A549 (cell line): ENCODE measurements at regions of chr7 and their contacts with region 1.

Region 1: DNA sequence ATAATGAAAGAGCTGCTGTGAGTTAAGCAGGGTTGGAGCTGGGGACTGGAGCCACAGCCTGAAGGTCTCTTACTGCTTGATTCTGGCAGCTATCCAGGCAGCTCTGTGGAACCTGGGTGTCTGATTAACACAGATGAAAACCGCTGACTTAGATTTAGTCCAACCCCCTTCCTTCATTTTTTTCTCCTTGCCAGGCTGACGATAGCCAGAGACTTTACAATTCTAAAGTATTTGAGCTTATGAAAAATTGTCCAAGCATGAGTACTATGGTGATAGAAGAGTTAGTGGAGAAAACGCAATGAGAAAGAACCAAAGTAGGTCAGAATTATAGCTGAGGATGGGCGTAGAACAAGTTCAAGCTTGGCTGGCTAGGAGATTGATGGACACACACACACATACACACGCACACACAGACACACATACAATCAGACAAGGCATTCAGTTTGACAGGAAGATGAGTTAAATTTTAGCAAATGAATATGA is 13.5 kb upstream of the GPR85 start:
- DNase-seq: no peak
- ATAC-seq: no peak
- H3K4me3 ChIP-seq: no peak overlapping the region
- H3K27ac ChIP-seq: no peak overlapping the region
- H3K4me1 ChIP-seq: no peaks in the 10 kb centered on the region
- CTCF ChIP-seq: no peak
- EP300 ChIP-seq: no peak
- POLR2A ChIP-seq: no peak
- RAD21 ChIP-seq: no peak

Region 2: GRCh38 chr7:113040849-113041248 is 59.3 kb before region 1 on chr7:
- CTCF ChIA-PET with region 1: no interaction called
- POLR2A ChIA-PET with region 1: no interaction called
- DNase-seq: no peak
- ATAC-seq: no peak
- H3K4me3 ChIP-seq: no peak overlapping the region
- H3K27ac ChIP-seq: no peak overlapping the region
- H3K4me1 ChIP-seq: no peaks in the 10 kb centered on the region
- CTCF ChIP-seq: no peak
- EP300 ChIP-seq: no peak
- POLR2A ChIP-seq: no peak
- RAD21 ChIP-seq: no peak

Region 3: GRCh38 chr7:113054938-113055337 is 45.2 kb before region 1 on chr7:
- CTCF ChIA-PET with region 1: no interaction called
- POLR2A ChIA-PET with region 1: no interaction called
- DNase-seq: no peak
- ATAC-seq: no peak
- H3K4me3 ChIP-seq: no peak overlapping the region
- H3K27ac ChIP-seq: no peak overlapping the region
- H3K4me1 ChIP-seq: no peaks in the 10 kb centered on the region
- CTCF ChIP-seq: no peak
- EP300 ChIP-seq: no peak
- POLR2A ChIP-seq: no peak
- RAD21 ChIP-seq: no peak

Region 4: GRCh38 chr7:113118074-113118959 is 18.2 kb after region 1 on chr7 and contains the start of gene SMIM30:
- CTCF ChIA-PET with region 1: no interaction called
- POLR2A ChIA-PET with region 1: interaction called, 10 read pairs
- DNase-seq: peak; percentile 75 to 90
- ATAC-seq: peak; percentile 100
- H3K4me3 ChIP-seq: peak within 1 kb of the TSS; percentile 71
- H3K27ac ChIP-seq: peak within 1 kb of the TSS; percentile 71 to 79
- H3K4me1 ChIP-seq: 0 out of 3 replicates have a peak, but pooled peaks cover 6% of the 10 kb centered on the region
- CTCF ChIP-seq: no peak
- EP300 ChIP-seq: no peak
- POLR2A ChIP-seq: peak; percentile 90
- RAD21 ChIP-seq: no peak
- polyA plus RNA-seq, gene SMIM30: 62.7 and 62.8 TPM in 2 replicates